Left cardiac atrium (tissue), 4 donors: ENCODE measurements at regions of chr4 and their contacts with region 1.

Region 1: GRCh38 chr4:142719854-142720541 is 126.1 kb downstream of the INPP4B start:
- DNase-seq: no peak
- ATAC-seq: no peak

Region 2: DNA sequence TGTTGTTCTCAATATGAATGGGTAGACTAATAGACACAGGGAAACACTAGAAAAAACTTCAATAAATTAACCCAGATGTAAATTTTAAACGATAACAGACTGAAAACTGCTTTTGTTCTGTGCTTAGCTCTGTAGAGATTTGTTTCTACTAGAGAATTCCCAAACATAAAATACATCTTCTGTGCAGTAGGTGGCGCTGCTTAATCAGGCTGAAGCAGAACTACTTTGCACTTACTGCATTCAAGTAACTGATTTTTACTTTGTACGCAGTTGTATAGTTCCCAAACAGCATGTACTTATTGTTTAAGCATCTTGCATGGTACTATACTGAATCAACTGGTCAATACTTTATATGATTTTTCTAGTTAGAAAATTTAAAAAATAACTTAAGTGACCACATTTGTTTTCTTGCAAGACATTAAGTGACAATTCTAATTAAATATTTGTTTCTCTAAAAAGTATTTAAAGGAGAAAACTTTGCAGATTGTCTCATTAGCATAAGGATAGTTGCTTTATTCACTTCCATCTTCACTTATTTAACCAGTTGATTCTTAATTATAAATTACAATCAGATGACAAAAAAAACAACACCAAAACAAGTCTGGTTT is 593.0 kb before region 1 on chr4:
- intact Hi-C with region 1: loop called in 1 of 2 experiments (anchors 2 kb)
- DNase-seq: peak; percentile 40
- ATAC-seq: peak; percentile 38 to 62

Region 3: GRCh38 chr4:142353149-142353738 is 366.8 kb before region 1 on chr4:
- intact Hi-C with region 1: loop called in 1 of 2 experiments (anchors 5 kb)
- DNase-seq: no peak
- ATAC-seq: peak; percentile 55 to 60